Mucosa of descending colon (tissue), 3 donors: ENCODE measurements at regions of chr12 and their contacts with region 1.

Region 1: GRCh38 chr12:111396726-111397445 is 8.8 kb upstream of the SH2B3 start:
- DNase-seq: peak; percentile 85 to 91 (median 89)
- ATAC-seq: peak; percentile 98
- H3K4me3 ChIP-seq: no peak overlapping the region
- H3K4me1 ChIP-seq: no peaks in the 10 kb centered on the region
- CTCF ChIP-seq: peak; percentile 91

Region 2: GRCh38 chr12:111451649-111452129 is 54.8 kb after region 1 on chr12:
- intact Hi-C with region 1: loop called (anchors 2 to 5 kb)
- DNase-seq: no peak
- ATAC-seq: peak; percentile 61
- H3K4me3 ChIP-seq: no peak overlapping the region
- H3K4me1 ChIP-seq: peaks cover 12% of the 10 kb centered on the region
- CTCF ChIP-seq: peak; percentile 43

Region 3: DNA sequence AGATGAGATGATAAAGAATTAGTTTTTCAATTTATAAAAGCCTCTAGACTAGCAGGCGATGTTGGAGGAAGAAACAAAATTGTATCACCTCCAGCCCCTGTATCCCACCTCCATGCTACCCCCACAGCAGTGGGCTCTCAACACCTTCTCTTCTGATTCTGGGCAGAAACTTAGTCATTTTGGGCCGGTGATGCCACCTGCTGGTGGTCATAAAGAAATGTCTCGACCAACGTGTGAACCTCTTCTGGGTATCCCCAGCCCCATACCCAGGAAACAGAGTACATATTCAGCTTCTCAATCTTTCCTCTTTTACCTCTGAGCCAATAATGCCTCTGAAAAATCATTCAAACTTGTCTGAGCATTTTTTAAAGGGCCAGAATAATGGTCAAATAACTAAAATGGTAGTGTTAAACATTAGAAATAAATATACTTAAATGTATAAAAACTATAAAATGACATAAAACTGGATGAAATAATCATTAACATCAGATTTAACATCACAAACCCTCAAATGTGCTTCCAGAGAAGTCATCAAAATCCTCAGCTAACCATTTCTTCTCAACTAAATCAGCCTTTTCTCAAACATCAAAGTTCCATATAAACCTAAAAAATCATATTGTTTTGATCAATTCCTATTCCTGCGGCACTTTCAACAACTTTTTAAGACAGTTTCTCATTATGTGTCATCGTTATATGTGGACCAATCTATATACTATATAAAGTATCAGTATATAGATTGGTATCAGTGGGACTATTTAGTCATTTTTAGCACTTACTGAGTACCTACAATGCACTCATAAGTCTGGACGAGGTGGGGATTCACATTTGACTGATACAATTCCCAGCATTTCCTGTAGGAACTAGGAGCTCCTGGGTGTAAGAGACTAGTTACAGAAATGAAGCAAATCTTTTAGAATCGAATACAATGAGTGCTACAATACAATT is 132.8 kb after region 1 on chr12:
- intact Hi-C with region 1: loop called in 1 of 2 experiments (anchors 5 kb)
- DNase-seq: peak in 2 of 3 donors; percentile 17 to 42
- ATAC-seq: peak; percentile 70
- H3K4me3 ChIP-seq: no peak overlapping the region
- H3K4me1 ChIP-seq: no peaks in the 10 kb centered on the region
- CTCF ChIP-seq: no peak